Naive thymus-derived CD4-positive, alpha-beta T cell (primary cell): ENCODE measurements at regions of chr6 and their contacts with region 1.

Region 1: DNA sequence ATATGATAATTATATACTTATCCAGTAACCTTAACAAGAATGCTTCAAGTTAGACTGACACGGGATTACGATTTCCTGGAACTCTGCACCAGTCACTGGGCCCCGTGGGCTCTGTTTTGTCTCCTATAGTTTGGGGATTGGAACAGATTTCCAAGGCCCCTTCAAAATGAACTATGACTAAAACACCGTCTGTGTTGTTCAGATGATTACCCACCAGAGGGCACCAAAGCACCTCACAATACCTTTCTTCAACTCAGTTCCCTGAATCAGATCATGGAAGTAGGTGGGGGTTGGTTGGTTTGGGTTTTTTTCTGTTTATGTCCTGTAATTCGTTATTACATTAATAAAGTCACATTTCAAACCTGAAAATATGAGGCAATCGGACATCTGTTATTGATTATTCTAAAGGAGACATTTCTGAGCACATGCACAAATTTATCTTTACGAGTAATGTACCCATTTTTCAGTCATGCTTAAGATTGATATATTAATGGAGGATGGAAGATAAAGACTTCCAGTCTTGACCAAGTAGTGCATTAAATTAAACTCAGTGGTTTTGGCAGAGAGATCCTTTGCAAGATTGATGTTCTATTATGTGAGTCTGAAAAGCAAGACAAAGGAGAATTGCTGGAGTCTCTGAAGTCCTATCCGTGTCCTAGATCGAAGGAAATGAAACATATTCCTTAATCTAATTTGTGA is 112.0 kb upstream of the COL21A1 start:
- DNase-seq: peak in 8 of 9 donors; percentile 32 to 68 (median 58)
- ATAC-seq: peak; percentile 82
- H3K4me3 ChIP-seq: no peak overlapping the region
- H3K4me3 Mint-ChIP-seq: no peak overlapping the region
- H3K27ac ChIP-seq: no peak overlapping the region
- H3K27ac Mint-ChIP-seq: no peak overlapping the region
- H3K4me1 ChIP-seq: no peaks in the 10 kb centered on the region
- H3K4me1 Mint-ChIP-seq: no peaks in the 10 kb centered on the region
- H3K27me3 ChIP-seq: no peaks in the 10 kb centered on the region
- H3K27me3 Mint-ChIP-seq: no peaks in the 10 kb centered on the region

Region 2: DNA sequence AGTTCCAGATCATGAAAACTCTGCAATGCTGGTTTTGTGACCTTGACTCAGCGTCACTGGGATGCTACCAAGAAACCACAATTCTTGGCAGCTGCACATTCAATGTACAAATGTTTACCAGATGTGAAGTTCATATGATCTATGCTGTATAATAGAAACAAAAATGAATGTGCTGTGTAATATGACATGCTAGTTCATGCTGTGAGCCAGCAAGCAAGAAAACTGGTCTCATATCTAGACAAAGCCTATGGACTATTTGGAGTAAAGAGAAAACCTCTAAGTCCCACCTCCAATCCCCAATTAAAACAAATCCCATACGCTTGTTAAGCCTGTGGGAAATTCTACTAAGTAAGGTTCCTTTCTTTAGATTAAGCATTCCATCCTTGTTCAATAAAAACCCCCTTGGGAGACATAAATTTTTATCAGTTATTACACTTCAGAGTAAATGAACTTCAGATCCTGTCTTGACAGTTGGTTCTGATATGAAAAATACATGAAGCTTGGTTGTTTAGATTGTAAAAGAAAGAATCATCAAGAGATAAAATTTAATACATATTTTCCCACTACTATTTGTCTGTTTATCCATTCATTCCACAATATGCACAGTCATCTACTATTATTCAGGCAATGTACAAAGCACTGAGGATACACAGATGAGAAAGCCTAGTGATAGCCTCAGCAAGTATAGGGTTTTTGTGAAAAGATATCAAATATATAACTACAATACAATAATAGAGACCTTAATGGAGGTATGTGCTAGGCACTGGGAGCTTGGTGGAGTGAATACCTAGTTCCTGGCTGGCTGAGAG is 132.1 kb before region 1 on chr6:
- CTCF ChIA-PET with region 1: no interaction called
- POLR2A ChIA-PET with region 1: no interaction called
- intact Hi-C with region 1: no loop called
- DNase-seq: no peak
- ATAC-seq: no peak
- H3K4me3 ChIP-seq: no peak overlapping the region
- H3K4me3 Mint-ChIP-seq: no peak overlapping the region
- H3K27ac ChIP-seq: no peak overlapping the region
- H3K27ac Mint-ChIP-seq: no peak overlapping the region
- H3K4me1 ChIP-seq: no peaks in the 10 kb centered on the region
- H3K4me1 Mint-ChIP-seq: no peaks in the 10 kb centered on the region
- H3K27me3 ChIP-seq: no peaks in the 10 kb centered on the region
- H3K27me3 Mint-ChIP-seq: no peaks in the 10 kb centered on the region

Region 3: GRCh38 chr6:56549014-56549413 is 189.7 kb after region 1 on chr6:
- CTCF ChIA-PET with region 1: interaction called, 3 read pairs
- POLR2A ChIA-PET with region 1: no interaction called
- intact Hi-C with region 1: loop called in 1 of 2 experiments (anchors 1 kb)
- DNase-seq: no peak
- ATAC-seq: no peak
- H3K4me3 ChIP-seq: no peak overlapping the region
- H3K4me3 Mint-ChIP-seq: no peak overlapping the region
- H3K27ac ChIP-seq: no peak overlapping the region
- H3K27ac Mint-ChIP-seq: no peak overlapping the region
- H3K4me1 ChIP-seq: no peaks in the 10 kb centered on the region
- H3K4me1 Mint-ChIP-seq: peaks cover 0 to 4% (median 0%) of the 10 kb centered on the region in 7 donors
- H3K27me3 ChIP-seq: no peaks in the 10 kb centered on the region
- H3K27me3 Mint-ChIP-seq: peaks cover 0 to 3% (median 0%) of the 10 kb centered on the region in 5 donors

Region 4: DNA sequence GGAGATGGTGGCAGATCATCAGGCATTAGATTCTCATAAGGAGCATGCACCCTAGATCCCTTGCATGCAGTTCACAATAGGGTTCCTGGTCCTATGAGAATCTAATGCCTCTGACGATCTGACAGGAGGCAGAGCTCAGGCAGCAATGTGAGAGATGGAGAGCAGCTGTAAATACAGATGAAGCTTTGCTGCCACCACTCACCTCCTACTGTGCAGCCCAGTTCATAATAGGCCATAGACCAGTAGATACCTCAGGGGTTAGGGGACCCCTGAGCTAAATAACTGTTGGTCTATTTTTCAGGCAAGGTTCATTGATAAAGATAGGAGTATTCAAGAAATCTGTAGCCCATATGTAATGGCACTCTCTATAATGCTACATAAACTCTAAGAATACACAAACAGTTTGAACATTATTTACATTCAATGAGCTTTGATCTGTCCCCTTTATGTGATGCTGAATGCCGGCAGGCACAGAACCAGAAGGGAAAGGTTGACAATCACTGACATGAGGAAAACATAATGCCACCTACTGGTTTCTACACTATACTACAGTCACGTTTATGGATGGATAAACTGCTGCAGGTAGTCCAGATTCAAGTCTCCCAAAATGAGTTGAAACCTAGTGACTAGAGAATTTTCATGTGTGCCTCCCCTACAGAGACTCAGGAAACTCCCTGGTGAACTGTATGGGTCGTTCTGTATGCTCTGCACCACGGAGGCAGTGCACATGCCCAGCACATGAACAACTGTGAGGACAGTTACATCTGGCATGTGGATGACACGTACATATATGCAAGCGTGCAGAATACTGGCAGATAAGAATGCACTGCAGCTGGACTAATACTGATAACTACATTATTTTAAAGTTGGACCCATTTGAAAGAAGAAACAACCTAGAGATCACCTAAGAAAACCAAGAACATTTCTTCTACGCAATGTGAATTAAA is 211.3 kb after region 1 on chr6:
- CTCF ChIA-PET with region 1: interaction called, 3 read pairs
- POLR2A ChIA-PET with region 1: no interaction called
- intact Hi-C with region 1: loop called (anchors 1 kb)
- DNase-seq: peak in 4 of 9 donors; percentile 14 to 24 (median 16)
- ATAC-seq: peak; percentile 50
- H3K4me3 ChIP-seq: no peak overlapping the region
- H3K4me3 Mint-ChIP-seq: no peak overlapping the region
- H3K27ac ChIP-seq: no peak overlapping the region
- H3K27ac Mint-ChIP-seq: no peak overlapping the region
- H3K4me1 ChIP-seq: no peaks in the 10 kb centered on the region
- H3K4me1 Mint-ChIP-seq: no peaks in the 10 kb centered on the region
- H3K27me3 ChIP-seq: no peaks in the 10 kb centered on the region
- H3K27me3 Mint-ChIP-seq: peaks cover 0 to 4% (median 0%) of the 10 kb centered on the region in 5 donors

Region 5: DNA sequence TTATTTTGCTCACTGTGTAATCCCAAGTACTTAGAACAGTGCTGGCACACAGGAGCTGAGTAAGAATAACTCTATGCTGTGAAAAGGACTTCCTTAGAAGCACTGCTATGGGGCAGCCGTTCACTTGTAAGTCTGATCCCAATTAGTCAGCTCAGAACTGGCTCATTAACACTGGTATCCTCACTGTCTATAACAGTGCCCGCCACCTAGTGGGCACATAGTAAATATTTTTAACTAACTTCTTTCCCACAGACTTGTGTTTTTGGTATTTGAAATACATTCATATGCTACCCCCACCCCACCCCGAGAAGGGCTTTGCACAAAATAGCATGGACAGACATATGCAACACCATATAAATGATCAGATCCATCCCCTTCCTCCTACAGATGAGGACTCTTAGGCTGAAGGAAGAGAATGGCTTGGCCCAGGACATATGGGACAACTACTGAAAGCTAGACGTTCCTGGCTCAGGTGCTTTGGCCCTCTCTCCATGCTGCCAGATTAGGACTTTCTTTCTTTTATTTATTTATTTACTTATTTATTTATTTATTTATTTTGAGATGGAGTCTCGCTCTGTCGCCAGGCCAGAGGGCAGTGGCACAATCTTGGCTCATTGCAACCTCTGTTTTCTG is 236.3 kb after region 1 on chr6:
- CTCF ChIA-PET with region 1: interaction called, 8 read pairs
- POLR2A ChIA-PET with region 1: no interaction called
- intact Hi-C with region 1: loop called (anchors 1 kb)
- DNase-seq: peak in 7 of 9 donors; percentile 10 to 39 (median 27)
- ATAC-seq: peak; percentile 83
- H3K4me3 ChIP-seq: no peak overlapping the region
- H3K4me3 Mint-ChIP-seq: peak overlapping the region in 1 of 10 donors; percentile 58
- H3K27ac ChIP-seq: no peak overlapping the region
- H3K27ac Mint-ChIP-seq: peak overlapping the region in 1 of 9 donors; percentile 42
- H3K4me1 ChIP-seq: no peaks in the 10 kb centered on the region
- H3K4me1 Mint-ChIP-seq: peaks cover 12 to 30% (median 28%) of the 10 kb centered on the region in 7 donors
- H3K27me3 ChIP-seq: no peaks in the 10 kb centered on the region
- H3K27me3 Mint-ChIP-seq: no peaks in the 10 kb centered on the region

Region 6: GRCh38 chr6:56699066-56699654 is 339.8 kb after region 1 on chr6:
- CTCF ChIA-PET with region 1: no interaction called
- POLR2A ChIA-PET with region 1: no interaction called
- intact Hi-C with region 1: loop called (anchors 1 kb)
- DNase-seq: peak in 1 of 9 donors; percentile 8
- ATAC-seq: no peak
- H3K4me3 ChIP-seq: no peak overlapping the region
- H3K4me3 Mint-ChIP-seq: no peak overlapping the region
- H3K27ac ChIP-seq: no peak overlapping the region
- H3K27ac Mint-ChIP-seq: no peak overlapping the region
- H3K4me1 ChIP-seq: no peaks in the 10 kb centered on the region
- H3K4me1 Mint-ChIP-seq: peaks cover 0 to 2% (median 0%) of the 10 kb centered on the region in 7 donors
- H3K27me3 ChIP-seq: no peaks in the 10 kb centered on the region
- H3K27me3 Mint-ChIP-seq: peaks cover 0 to 7% (median 4%) of the 10 kb centered on the region in 5 donors

Region 7: GRCh38 chr6:56851541-56852259 is 492.4 kb after region 1 on chr6:
- CTCF ChIA-PET with region 1: interaction called, 3 read pairs
- POLR2A ChIA-PET with region 1: no interaction called
- intact Hi-C with region 1: loop called (anchors 1 to 5 kb)
- DNase-seq: peak in 5 of 9 donors; percentile 8 to 29 (median 24)
- ATAC-seq: peak; percentile 87
- H3K4me3 ChIP-seq: peak overlapping the region; percentile 13
- H3K4me3 Mint-ChIP-seq: peak overlapping the region; percentile 63 to 83 (median 81)
- H3K27ac ChIP-seq: no peak overlapping the region
- H3K27ac Mint-ChIP-seq: peak overlapping the region in 3 of 9 donors; percentile 15 to 67 (median 16)
- H3K4me1 ChIP-seq: no peaks in the 10 kb centered on the region
- H3K4me1 Mint-ChIP-seq: peaks cover 13 to 26% (median 25%) of the 10 kb centered on the region in 7 donors
- H3K27me3 ChIP-seq: peaks cover 0 to 3% of the 10 kb centered on the region in 2 donors
- H3K27me3 Mint-ChIP-seq: peaks cover 26 to 64% (median 52%) of the 10 kb centered on the region in 5 donors

Region 8: GRCh38 chr6:57324538-57324937 is 965.2 kb after region 1 on chr6:
- CTCF ChIA-PET with region 1: no interaction called
- POLR2A ChIA-PET with region 1: no interaction called
- intact Hi-C with region 1: loop called in 1 of 2 experiments (anchors 1 kb)
- DNase-seq: peak in 5 of 9 donors; percentile 5 to 41 (median 31)
- ATAC-seq: no peak
- H3K4me3 ChIP-seq: no peak overlapping the region
- H3K4me3 Mint-ChIP-seq: no peak overlapping the region
- H3K27ac ChIP-seq: no peak overlapping the region
- H3K27ac Mint-ChIP-seq: no peak overlapping the region
- H3K4me1 ChIP-seq: no peaks in the 10 kb centered on the region
- H3K4me1 Mint-ChIP-seq: peaks cover 11 to 31% (median 20%) of the 10 kb centered on the region in 7 donors
- H3K27me3 ChIP-seq: no peaks in the 10 kb centered on the region
- H3K27me3 Mint-ChIP-seq: no peaks in the 10 kb centered on the region